Common myeloid progenitor, CD34-positive (primary cell): ENCODE measurements at regions of chr12 and their contacts with region 1.

Region 1: GRCh38 chr12:57031138-57031725 is 14.9 kb upstream of the TAC3 start:
- DNase-seq: peak; percentile 38 to 77 (median 68)
- H3K4me3 ChIP-seq: peak overlapping the region in 1 of 7 experiments; percentile 25
- H3K27ac ChIP-seq: peak overlapping the region in 1 of 2 experiments; percentile 6
- H3K4me1 ChIP-seq: peaks cover 8 to 29% (median 28%) of the 10 kb centered on the region in 4 experiments
- H3K27me3 ChIP-seq: no peaks in the 10 kb centered on the region

Region 2: DNA sequence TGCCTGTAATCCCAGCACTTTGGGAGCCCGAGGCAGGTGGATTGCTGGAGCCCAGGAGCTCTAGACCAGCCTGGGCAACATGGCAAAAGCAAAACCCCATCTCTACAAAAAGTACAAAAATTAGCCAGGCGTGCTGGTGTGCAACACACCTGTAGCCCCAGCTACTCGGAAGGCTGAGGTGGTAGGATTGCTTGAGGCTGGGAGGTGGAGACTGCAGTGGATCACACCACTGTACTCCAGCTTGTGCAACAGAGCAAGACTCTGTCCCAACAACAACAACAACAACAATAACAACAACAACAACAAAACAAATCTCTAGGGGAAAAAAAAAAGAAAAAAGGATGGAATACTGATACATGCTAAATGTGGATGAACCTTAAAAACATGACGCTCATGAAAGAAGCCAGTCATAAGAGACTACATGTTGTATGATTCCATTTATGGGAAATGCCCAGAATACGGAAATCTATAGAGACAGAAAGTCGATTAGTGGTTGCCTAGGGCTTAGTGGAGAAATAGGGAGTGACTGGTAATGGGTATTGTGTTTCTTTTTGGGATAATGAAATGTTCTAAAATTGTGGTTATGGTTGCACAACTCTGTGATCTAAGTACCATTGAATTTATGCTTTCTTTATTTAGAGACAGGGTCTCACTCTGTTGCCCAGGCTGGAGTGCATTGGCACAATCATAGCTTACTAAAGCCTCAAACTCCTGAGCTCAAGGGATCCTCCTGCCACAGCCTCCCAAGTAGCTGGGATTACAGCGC is 501.8 kb before region 1 on chr12:
- CTCF ChIA-PET with region 1: no interaction called
- POLR2A ChIA-PET with region 1: interaction called, 14 read pairs
- DNase-seq: no peak
- H3K4me3 ChIP-seq: no peak overlapping the region
- H3K27ac ChIP-seq: no peak overlapping the region
- H3K4me1 ChIP-seq: no peaks in the 10 kb centered on the region
- H3K27me3 ChIP-seq: no peaks in the 10 kb centered on the region